ENCODE measurements at regions of chr17 and their contacts with region 1.

Region 1: DNA sequence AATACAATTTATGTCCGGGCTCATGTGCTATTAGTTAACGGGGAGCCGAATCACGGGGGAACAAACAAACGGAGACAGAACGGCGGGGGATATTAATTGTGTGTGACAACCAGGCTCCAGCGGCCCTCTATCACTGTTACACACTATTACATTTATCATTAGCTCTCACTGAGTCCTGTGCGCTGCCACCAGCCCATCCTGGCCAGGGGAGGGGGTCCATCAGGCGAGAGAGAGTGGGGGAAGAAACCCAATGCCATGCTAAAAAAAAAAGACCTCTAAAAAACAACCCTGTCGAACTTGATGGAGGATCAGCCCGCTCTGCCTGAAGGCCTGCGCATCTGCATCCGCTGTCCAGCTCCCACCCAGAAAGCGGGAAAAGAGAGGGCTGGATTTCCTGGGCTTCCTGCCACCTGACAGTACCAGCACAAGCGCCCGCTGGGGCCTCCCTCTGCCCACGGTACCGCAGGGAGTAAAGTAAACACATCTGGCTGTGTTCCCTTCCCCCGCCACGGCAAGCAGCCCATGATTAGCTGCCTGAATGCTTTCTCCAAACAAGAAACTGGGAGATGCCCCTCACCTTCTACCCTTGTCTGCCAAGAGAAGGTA is 41.7 kb downstream of the PIPOX start:
- DNase-seq: no peak
- H3K4me3 ChIP-seq: no peak overlapping the region
- CTCF ChIP-seq: no peak

Region 2: GRCh38 chr17:29042679-29043538 is 41.7 kb before region 1 on chr17 and contains the start of gene PIPOX:
- in situ Hi-C with region 1: loop called (anchors 5 kb)
- DNase-seq: peak; percentile 43
- H3K4me3 ChIP-seq: no peak within 1 kb of the TSS
- CTCF ChIP-seq: peak; percentile 39

Measured in astrocyte of the cerebellum (primary cell).